ENCODE measurements at regions of chr17 and their contacts with region 1.

Region 1: GRCh38 chr17:17823433-17824118 is 13.2 kb downstream of the SREBF1 start:
- DNase-seq: peak; percentile 66 to 86 (median 80)
- ATAC-seq: peak; percentile 79 to 82
- H3K4me3 Mint-ChIP-seq: peak overlapping the region; percentile 75 to 88 (median 84)
- H3K27ac Mint-ChIP-seq: peak overlapping the region; percentile 73 to 98 (median 94)
- H3K4me1 Mint-ChIP-seq: peaks cover 56 to 96% (median 95%) of the 10 kb centered on the region in 4 donors
- H3K27me3 Mint-ChIP-seq: no peaks in the 10 kb centered on the region

Region 2: DNA sequence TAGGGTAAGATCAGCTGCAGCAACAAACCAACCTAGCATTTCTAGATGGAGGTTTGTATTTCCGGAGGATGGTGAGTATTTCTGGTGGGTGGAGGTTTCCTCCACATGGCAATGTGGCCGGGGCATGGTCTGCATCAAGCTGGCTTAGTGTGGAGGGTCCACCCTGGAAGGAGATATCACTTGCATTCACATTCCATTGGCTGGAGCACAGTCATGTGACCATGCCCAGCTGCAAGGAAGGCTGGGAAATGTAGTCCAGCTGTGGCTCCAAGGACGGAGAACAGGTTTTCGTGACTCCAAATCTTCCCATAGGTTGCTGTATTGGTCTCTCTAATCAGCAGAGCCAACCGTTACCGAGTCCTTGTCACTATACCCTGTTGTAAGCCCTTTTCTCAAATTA is 73.7 kb before region 1 on chr17:
- POLR2A ChIA-PET with region 1: no interaction called
- DNase-seq: peak in 8 of 10 donors; percentile 41 to 77 (median 56)
- ATAC-seq: no peak
- H3K4me3 Mint-ChIP-seq: peak overlapping the region; percentile 34 to 79 (median 66)
- H3K27ac Mint-ChIP-seq: peak overlapping the region; percentile 80 to 100 (median 96)
- H3K4me1 Mint-ChIP-seq: peaks cover 38 to 79% (median 71%) of the 10 kb centered on the region in 4 donors
- H3K27me3 Mint-ChIP-seq: no peaks in the 10 kb centered on the region

Region 3: DNA sequence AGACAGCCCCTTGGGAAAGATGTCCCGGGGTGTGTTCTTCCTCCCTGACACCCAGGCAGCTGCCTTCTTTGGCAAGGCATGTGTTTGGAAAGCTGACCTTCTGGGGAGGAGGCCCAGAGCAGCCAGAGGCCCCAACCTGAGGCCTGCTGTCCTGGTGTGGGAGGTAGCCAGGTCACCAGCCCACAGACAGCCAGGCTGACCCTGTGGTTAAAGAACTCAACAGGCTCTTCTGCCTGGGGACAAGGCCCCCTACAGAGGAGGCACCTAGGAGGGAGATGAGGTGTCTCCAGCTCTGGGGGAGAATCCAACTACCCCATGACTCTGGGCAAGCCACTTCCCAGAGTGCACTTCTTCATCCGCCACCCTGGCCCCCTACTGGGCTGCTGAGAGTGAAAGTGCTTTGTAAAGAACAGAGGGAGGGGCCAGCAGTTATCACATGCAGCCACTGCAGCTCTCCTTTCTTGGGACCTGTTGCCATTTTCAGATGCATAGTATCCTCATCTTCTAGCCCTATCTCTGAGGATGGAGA is 26.3 kb after region 1 on chr17:
- POLR2A ChIA-PET with region 1: interaction called, 19 read pairs
- DNase-seq: peak; percentile 45 to 85 (median 72)
- ATAC-seq: peak; percentile 58 to 72
- H3K4me3 Mint-ChIP-seq: peak overlapping the region; percentile 55 to 86 (median 77)
- H3K27ac Mint-ChIP-seq: peak overlapping the region; percentile 91 to 99 (median 96)
- H3K4me1 Mint-ChIP-seq: peaks cover 49 to 87% (median 70%) of the 10 kb centered on the region in 4 donors
- H3K27me3 Mint-ChIP-seq: no peaks in the 10 kb centered on the region